GM18951 (cell line): ENCODE measurements at regions of chr2 and their contacts with region 1.

Region 1: GRCh38 chr2:158745044-158745865 is 49.9 kb upstream of the DAPL1 start:
- POLR2A ChIP-seq: no peak

Region 2: DNA sequence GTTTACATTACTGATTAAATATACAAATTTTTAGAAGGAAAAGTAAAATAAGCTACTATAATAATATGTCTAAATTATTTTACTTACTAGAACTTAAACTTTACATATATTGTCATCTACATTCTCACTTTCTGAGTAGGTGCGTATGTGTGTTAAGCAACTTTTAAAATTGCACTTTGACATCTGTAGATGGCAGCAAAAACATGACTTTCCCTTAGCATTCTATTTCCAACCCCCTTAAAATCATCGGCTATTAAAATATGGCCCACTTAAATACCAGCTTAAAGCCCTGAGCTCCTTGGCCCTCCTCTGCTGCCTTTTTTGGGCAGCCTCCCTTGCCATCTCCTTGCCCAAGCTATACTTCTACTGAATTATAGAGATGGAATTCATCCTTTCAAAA is 565.6 kb before region 1 on chr2:
- in situ Hi-C with region 1: loop called (anchors 25 kb)
- POLR2A ChIP-seq: no peak